Left ventricle myocardium superior (tissue), 1 donor: ENCODE measurements at regions of chr12 and their contacts with region 1.

Region 1: DNA sequence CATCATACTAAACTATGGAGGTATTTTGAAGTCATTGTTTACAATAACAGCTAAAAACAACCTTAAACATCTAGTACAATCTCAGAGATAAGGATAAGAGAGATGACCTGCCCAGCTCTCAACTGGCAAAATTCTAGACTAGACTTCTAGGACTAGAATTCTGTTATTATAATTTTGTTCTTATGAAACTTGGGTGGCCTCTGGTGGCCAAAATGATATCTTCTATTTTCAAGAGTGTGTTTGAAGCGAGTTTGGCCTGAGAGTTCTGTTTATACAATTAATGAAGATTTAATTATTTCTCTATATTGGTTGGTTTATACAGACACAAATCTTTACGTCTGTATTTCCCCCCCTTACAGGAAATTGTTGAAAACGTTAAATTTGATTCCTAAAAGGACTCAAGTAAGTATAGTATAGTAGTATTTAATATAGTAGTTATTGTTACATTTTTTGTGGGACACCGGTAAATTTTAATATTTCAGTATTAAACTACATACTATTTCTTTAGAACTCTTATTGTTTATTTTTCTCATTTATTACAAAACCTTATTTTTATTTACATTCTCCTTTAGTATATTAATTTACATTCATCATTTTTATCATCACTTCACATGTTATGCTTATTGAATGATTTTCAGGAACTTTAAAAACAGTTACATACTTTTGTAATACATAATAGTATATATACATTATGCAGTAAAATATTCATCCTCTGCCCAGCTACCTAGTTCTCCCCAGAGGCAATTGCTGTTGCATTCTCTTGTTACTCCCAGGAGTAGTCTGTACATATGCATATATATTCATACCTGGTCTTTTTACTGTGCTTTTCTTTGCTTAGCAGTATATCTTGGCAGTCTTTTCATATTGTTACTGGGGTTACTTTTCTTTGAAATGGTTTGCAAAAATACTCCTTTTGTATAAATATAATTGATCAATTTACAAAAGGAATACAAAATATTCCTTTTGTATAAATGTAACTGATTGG is 6.6 kb downstream of the PPHLN1 start:
- DNase-seq: no peak
- ATAC-seq: peak; percentile 51

Region 2: GRCh38 chr12:41277116-41277945 is 1055.3 kb before region 1 on chr12:
- intact Hi-C with region 1: loop called (anchors 10 kb)
- DNase-seq: no peak
- ATAC-seq: no peak

Region 3: DNA sequence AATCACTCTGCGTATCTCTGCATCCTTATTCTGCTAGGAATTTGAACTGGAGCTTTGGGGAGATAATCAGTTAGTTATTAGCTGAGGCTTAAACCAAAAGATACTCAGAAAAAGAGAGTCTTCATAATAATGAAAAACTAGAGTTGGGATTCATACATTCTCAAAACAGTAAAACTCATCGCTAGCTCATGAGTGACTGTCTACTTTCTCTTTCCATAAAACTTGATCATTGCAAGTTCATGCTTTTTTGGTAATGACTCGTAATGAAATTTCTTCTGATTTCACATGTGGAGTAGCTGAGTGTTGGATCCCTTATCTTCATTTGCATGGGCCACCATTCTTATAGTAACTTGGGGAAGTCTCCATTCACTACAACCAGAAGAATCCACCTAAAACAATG is 746.8 kb before region 1 on chr12:
- intact Hi-C with region 1: no loop called
- DNase-seq: no peak
- ATAC-seq: no peak

Region 4: GRCh38 chr12:42237052-42237852 is 95.3 kb before region 1 on chr12:
- intact Hi-C with region 1: loop called (anchors 5 kb)
- DNase-seq: peak; percentile 86
- ATAC-seq: peak; percentile 70